PC-9 (cell line): ENCODE measurements at regions of chr4 and their contacts with region 1.

Region 1: GRCh38 chr4:40438384-40439026 is 103.4 kb downstream of the CHRNA9 start:
- DNase-seq: no peak
- H3K4me3 ChIP-seq: no peak overlapping the region
- H3K27ac ChIP-seq: no peak overlapping the region
- H3K4me1 ChIP-seq: no peaks in the 10 kb centered on the region
- H3K27me3 ChIP-seq: no peaks in the 10 kb centered on the region
- CTCF ChIP-seq: no peak

Region 2: GRCh38 chr4:39591290-39591689 is 847.2 kb before region 1 on chr4:
- CTCF ChIA-PET with region 1: interaction called, 11 read pairs
- POLR2A ChIA-PET with region 1: no interaction called
- intact Hi-C with region 1: no loop called
- DNase-seq: peak in 1 of 2 experiments; percentile 57
- H3K4me3 ChIP-seq: no peak overlapping the region
- H3K27ac ChIP-seq: no peak overlapping the region
- H3K4me1 ChIP-seq: no peaks in the 10 kb centered on the region
- H3K27me3 ChIP-seq: no peaks in the 10 kb centered on the region
- CTCF ChIP-seq: peak; percentile 58

Region 3: DNA sequence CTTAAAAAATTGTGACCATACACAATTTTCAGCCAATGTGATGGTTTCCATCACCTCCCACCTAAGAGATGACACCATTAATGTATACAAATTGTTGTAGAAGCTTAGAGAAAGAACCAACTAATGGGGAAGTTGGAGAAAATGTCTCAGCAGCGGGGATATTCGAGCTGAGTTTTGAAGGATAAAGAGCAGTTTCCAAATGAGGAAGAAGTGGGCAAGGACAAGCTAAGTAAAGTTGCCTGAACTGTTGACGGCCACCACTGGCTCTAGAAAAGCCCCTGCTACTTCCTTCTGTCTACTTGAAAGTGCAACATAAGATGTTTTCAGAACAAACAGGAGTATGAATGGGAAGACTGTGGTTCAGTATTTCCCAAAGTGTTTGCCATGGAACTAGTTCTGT is 11.4 kb before region 1 on chr4:
- CTCF ChIA-PET with region 1: no interaction called
- POLR2A ChIA-PET with region 1: interaction called, 15 read pairs
- intact Hi-C with region 1: no loop called
- DNase-seq: no peak
- H3K4me3 ChIP-seq: no peak overlapping the region
- H3K27ac ChIP-seq: no peak overlapping the region
- H3K4me1 ChIP-seq: no peaks in the 10 kb centered on the region
- H3K27me3 ChIP-seq: no peaks in the 10 kb centered on the region
- CTCF ChIP-seq: no peak

Region 4: DNA sequence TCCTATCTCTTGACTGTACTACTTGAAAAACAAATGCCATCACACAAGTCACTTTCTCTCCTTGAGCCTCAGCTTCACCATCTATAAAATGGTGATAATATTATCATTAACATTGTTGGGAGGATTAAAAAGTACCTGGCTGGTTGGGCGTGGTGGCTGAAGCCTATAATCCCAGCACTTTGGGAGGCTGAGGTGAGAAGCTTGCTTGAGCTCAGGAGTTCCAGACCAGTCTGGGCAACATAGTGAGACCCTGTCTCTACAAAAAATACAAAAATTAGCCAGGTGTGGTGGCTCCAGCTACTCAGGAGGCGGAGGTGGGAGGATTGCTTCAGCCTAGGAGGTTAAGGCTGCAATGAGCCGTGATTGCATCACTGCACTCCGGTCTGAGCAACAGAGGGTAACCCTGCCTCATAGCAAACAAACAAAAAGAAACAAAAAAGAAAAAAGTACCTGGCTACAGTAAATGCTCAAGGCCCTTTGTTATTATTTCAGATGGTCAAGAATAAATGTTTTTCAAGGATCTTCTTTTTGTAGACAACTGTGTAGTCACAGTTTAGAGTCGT is 16.9 kb after region 1 on chr4:
- CTCF ChIA-PET with region 1: no interaction called
- POLR2A ChIA-PET with region 1: interaction called, 14 read pairs
- intact Hi-C with region 1: no loop called
- DNase-seq: no peak
- H3K4me3 ChIP-seq: no peak overlapping the region
- H3K27ac ChIP-seq: peak overlapping the region; percentile 21
- H3K4me1 ChIP-seq: peaks cover 57% of the 10 kb centered on the region
- H3K27me3 ChIP-seq: no peaks in the 10 kb centered on the region
- CTCF ChIP-seq: no peak

Region 5: GRCh38 chr4:40515398-40516293 is 77.1 kb after region 1 on chr4:
- CTCF ChIA-PET with region 1: no interaction called
- POLR2A ChIA-PET with region 1: no interaction called
- intact Hi-C with region 1: no loop called
- DNase-seq: peak; percentile 47 to 75
- H3K4me3 ChIP-seq: no peak overlapping the region; the same call in 1 of the 2 replicates
- H3K27ac ChIP-seq: peak overlapping the region; percentile 85
- H3K4me1 ChIP-seq: peaks cover 49% of the 10 kb centered on the region
- H3K27me3 ChIP-seq: no peaks in the 10 kb centered on the region
- CTCF ChIP-seq: no peak; the same call in 1 of the 2 replicates

Region 6: DNA sequence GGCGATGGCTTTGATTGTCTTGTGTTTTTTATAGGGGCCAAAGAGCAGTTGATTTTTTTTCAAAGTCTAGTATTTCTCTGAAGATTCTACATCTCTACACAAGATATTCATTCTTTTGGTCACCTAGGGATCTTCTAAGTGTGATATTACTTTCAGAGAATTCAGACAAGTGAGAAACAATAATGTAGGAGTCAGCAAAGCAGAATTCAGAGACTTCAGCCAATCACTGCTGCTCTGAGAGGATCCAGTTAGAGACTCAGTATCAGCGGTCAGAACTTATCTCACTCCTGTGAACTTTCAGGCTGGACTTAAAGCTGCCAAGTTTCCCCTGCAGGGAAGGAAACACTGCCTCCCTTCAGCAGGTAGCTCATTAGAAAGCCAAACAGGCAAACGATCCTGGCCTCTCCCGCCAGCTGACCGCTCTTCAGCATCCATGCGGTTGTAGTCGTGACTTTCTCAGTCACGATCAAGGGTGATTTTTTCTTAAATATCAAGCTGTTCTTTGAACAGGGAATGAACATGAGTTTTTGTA is 370.5 kb after region 1 on chr4:
- CTCF ChIA-PET with region 1: no interaction called
- POLR2A ChIA-PET with region 1: no interaction called
- intact Hi-C with region 1: no loop called
- DNase-seq: no peak
- H3K4me3 ChIP-seq: no peak overlapping the region
- H3K27ac ChIP-seq: no peak overlapping the region
- H3K4me1 ChIP-seq: no peaks in the 10 kb centered on the region
- H3K27me3 ChIP-seq: no peaks in the 10 kb centered on the region
- CTCF ChIP-seq: no peak

Region 7: DNA sequence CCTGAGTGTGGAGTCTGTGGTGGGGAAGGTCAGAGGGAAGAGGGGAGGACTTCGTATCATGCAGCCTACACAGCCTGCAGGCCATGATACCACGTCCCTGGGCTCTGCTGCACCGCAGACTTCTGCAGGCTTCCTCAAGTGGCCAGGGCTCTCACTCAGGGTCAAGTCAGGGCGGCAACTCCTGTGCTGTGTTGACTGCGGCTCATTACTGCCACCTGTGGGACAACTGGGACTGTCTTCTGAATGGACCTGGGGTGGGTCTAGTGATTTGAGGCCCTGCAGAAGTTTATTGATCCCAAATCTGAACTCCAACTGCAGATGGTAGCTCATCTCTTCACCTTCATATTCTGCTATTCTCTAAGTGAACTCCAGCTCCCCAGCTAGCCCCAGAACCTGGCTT is 478.4 kb after region 1 on chr4:
- CTCF ChIA-PET with region 1: no interaction called
- POLR2A ChIA-PET with region 1: no interaction called
- intact Hi-C with region 1: no loop called
- DNase-seq: peak in 1 of 2 experiments; percentile 34
- H3K4me3 ChIP-seq: no peak overlapping the region
- H3K27ac ChIP-seq: no peak overlapping the region
- H3K4me1 ChIP-seq: no peaks in the 10 kb centered on the region
- H3K27me3 ChIP-seq: no peaks in the 10 kb centered on the region
- CTCF ChIP-seq: peak; percentile 49; the same call in 1 of the 2 replicates